Naive thymus-derived CD4-positive, alpha-beta T cell (primary cell): ENCODE measurements at regions of chr5 and their contacts with region 1.

Region 1: GRCh38 chr5:154196955-154197652 is 6.6 kb downstream of the GALNT10 start:
- DNase-seq: peak in 2 of 9 donors; percentile 19 to 27
- ATAC-seq: peak; percentile 65
- H3K4me3 ChIP-seq: no peak overlapping the region
- H3K4me3 Mint-ChIP-seq: peak overlapping the region; percentile 1 to 84 (median 58)
- H3K27ac ChIP-seq: peak overlapping the region; percentile 0
- H3K27ac Mint-ChIP-seq: peak overlapping the region; percentile 27 to 97 (median 76)
- H3K4me1 ChIP-seq: peaks cover 28 to 29% of the 10 kb centered on the region in 2 donors
- H3K4me1 Mint-ChIP-seq: peaks cover 43 to 78% (median 49%) of the 10 kb centered on the region in 7 donors
- H3K27me3 ChIP-seq: no peaks in the 10 kb centered on the region
- H3K27me3 Mint-ChIP-seq: no peaks in the 10 kb centered on the region

Region 2: GRCh38 chr5:153938191-153938842 is 258.8 kb before region 1 on chr5:
- CTCF ChIA-PET with region 1: no interaction called
- POLR2A ChIA-PET with region 1: no interaction called
- intact Hi-C with region 1: no loop called
- DNase-seq: no peak
- ATAC-seq: no peak
- H3K4me3 ChIP-seq: no peak overlapping the region
- H3K4me3 Mint-ChIP-seq: no peak overlapping the region
- H3K27ac ChIP-seq: no peak overlapping the region
- H3K27ac Mint-ChIP-seq: no peak overlapping the region
- H3K4me1 ChIP-seq: no peaks in the 10 kb centered on the region
- H3K4me1 Mint-ChIP-seq: no peaks in the 10 kb centered on the region
- H3K27me3 ChIP-seq: no peaks in the 10 kb centered on the region
- H3K27me3 Mint-ChIP-seq: peaks cover 0 to 14% (median 4%) of the 10 kb centered on the region in 5 donors

Region 3: DNA sequence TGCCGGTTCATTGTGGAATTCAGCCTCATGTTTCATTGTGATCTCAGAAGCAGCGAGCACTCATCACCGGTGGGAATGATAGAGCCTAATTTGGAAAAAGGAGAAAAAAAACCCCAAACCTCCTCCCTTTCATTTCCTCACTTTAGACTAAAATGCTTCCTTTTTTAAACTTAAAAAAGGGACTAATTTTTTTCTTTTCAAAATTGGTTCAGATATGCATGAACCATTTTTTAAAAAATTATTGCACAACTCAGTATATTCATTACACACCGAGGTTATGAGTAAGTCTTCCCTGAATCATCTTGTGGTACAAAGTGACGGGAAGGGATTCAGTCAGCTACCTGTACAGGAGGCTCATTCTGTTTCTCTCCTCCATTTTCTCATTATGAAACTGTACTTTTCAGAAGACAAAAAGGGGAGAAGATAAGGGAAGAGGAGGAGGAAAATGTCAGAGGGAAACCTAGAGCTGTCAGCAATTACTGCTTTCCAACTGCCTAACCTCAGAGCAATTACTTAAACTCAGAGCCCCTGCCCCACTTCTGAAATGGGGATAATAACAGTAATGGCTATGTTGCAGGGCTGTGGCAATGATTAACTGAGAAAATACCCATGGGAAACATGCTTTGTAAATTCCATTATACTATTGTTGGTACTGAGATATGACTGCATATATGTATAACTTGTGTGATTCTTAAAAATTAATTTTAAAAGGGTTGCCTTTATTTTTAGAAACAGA is 17.4 kb after region 1 on chr5:
- CTCF ChIA-PET with region 1: interaction called, 3 read pairs
- POLR2A ChIA-PET with region 1: interaction called, 3 read pairs
- intact Hi-C with region 1: loop called in 1 of 2 experiments (anchors 2 kb)
- DNase-seq: peak in 1 of 9 donors; percentile 22
- ATAC-seq: peak; percentile 26
- H3K4me3 ChIP-seq: no peak overlapping the region
- H3K4me3 Mint-ChIP-seq: peak overlapping the region in 1 of 10 donors; percentile 68
- H3K27ac ChIP-seq: no peak overlapping the region
- H3K27ac Mint-ChIP-seq: peak overlapping the region in 3 of 9 donors; percentile 31 to 79 (median 70)
- H3K4me1 ChIP-seq: no peaks in the 10 kb centered on the region
- H3K4me1 Mint-ChIP-seq: peaks cover 10 to 74% (median 21%) of the 10 kb centered on the region in 7 donors
- H3K27me3 ChIP-seq: no peaks in the 10 kb centered on the region
- H3K27me3 Mint-ChIP-seq: no peaks in the 10 kb centered on the region

Region 4: GRCh38 chr5:154221371-154221896 is 24.3 kb after region 1 on chr5:
- CTCF ChIA-PET with region 1: interaction called, 3 read pairs
- POLR2A ChIA-PET with region 1: interaction called, 3 read pairs
- intact Hi-C with region 1: loop called (anchors 1 to 2 kb)
- DNase-seq: peak in 8 of 9 donors; percentile 29 to 63 (median 46)
- ATAC-seq: peak; percentile 91
- H3K4me3 ChIP-seq: no peak overlapping the region
- H3K4me3 Mint-ChIP-seq: peak overlapping the region in 7 of 10 donors; percentile 2 to 71 (median 53)
- H3K27ac ChIP-seq: peak overlapping the region; percentile 51
- H3K27ac Mint-ChIP-seq: peak overlapping the region; percentile 83 to 98 (median 94)
- H3K4me1 ChIP-seq: peaks cover 6 to 10% of the 10 kb centered on the region in 2 donors
- H3K4me1 Mint-ChIP-seq: peaks cover 24 to 68% (median 36%) of the 10 kb centered on the region in 7 donors
- H3K27me3 ChIP-seq: no peaks in the 10 kb centered on the region
- H3K27me3 Mint-ChIP-seq: no peaks in the 10 kb centered on the region

Region 5: DNA sequence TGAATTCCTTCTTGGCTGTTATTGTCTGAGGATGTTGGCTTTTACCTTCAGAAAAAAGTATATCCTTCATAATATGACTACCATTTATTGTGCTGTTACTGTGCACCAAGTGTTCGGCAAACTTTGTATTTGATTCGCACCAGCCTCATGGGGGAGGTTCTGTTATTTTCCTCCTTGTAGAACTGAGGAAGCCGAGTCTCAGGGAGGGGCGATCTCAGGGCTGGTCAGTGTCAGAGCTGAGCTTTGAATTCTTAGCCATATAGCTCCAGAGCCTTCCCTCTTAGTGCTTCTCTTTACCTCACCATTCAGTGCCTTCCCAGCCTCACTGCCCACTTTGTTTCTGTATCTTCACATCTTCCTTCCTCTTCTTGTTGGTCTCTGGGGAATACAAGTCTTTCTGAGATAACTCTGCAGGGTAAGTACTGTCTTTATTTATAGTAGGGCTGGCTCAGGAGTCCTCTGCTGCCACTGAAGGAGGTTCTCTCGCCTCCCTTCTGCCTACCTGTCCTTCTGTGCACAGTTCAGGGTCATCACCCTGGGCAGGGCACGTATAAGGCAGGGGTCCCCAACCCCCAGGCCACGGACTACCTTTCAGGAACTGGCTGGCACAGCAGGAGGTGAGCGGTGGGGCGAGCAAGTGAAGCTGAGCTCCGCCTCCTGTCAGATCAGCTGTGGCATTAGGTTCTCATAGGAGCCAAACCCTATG is 41.8 kb after region 1 on chr5:
- CTCF ChIA-PET with region 1: interaction called, 5 read pairs
- POLR2A ChIA-PET with region 1: no interaction called
- intact Hi-C with region 1: loop called (anchors 1 to 5 kb)
- DNase-seq: no peak
- ATAC-seq: peak; percentile 20
- H3K4me3 ChIP-seq: no peak overlapping the region
- H3K4me3 Mint-ChIP-seq: no peak overlapping the region
- H3K27ac ChIP-seq: no peak overlapping the region
- H3K27ac Mint-ChIP-seq: peak overlapping the region in 1 of 9 donors; percentile 28
- H3K4me1 ChIP-seq: no peaks in the 10 kb centered on the region
- H3K4me1 Mint-ChIP-seq: peaks cover 14 to 58% (median 33%) of the 10 kb centered on the region in 7 donors
- H3K27me3 ChIP-seq: no peaks in the 10 kb centered on the region
- H3K27me3 Mint-ChIP-seq: no peaks in the 10 kb centered on the region

Region 6: GRCh38 chr5:154405078-154405792 is 208.1 kb after region 1 on chr5:
- CTCF ChIA-PET with region 1: interaction called, 3 read pairs
- POLR2A ChIA-PET with region 1: no interaction called
- intact Hi-C with region 1: loop called in 1 of 2 experiments (anchors 1 kb)
- DNase-seq: peak; percentile 31 to 75 (median 61)
- ATAC-seq: peak; percentile 96
- H3K4me3 ChIP-seq: peak overlapping the region; percentile 33
- H3K4me3 Mint-ChIP-seq: peak overlapping the region; percentile 35 to 80 (median 65)
- H3K27ac ChIP-seq: no peak overlapping the region
- H3K27ac Mint-ChIP-seq: peak overlapping the region in 3 of 9 donors; percentile 18 to 73 (median 32)
- H3K4me1 ChIP-seq: peaks cover 4 to 8% of the 10 kb centered on the region in 2 donors
- H3K4me1 Mint-ChIP-seq: peaks cover 0 to 15% (median 10%) of the 10 kb centered on the region in 7 donors
- H3K27me3 ChIP-seq: no peaks in the 10 kb centered on the region
- H3K27me3 Mint-ChIP-seq: no peaks in the 10 kb centered on the region